Activated CD8-positive, alpha-beta T cell treated with anti-CD3 and anti-CD28 coated beads for 36 hours (primary cell): ENCODE measurements at regions of chr14 and their contacts with region 1.

Region 1: GRCh38 chr14:35814371-35815005 is 5.4 kb upstream of the RALGAPA1 start:
- DNase-seq: peak; percentile 88
- ATAC-seq: peak; percentile 93
- H3K4me3 Mint-ChIP-seq: no peak overlapping the region
- H3K27ac Mint-ChIP-seq: no peak overlapping the region
- H3K4me1 Mint-ChIP-seq: no peaks in the 10 kb centered on the region
- H3K27me3 Mint-ChIP-seq: no peaks in the 10 kb centered on the region
- CTCF ChIP-seq: peak; percentile 78

Region 2: GRCh38 chr14:35438910-35439713 is 375.4 kb before region 1 on chr14:
- CTCF ChIA-PET with region 1: interaction called, 16 read pairs
- POLR2A ChIA-PET with region 1: no interaction called
- intact Hi-C with region 1: loop called (anchors 10 kb)
- DNase-seq: no peak
- ATAC-seq: peak; percentile 45
- H3K4me3 Mint-ChIP-seq: no peak overlapping the region
- H3K27ac Mint-ChIP-seq: no peak overlapping the region
- H3K4me1 Mint-ChIP-seq: peaks cover 6% of the 10 kb centered on the region
- H3K27me3 Mint-ChIP-seq: no peaks in the 10 kb centered on the region
- CTCF ChIP-seq: peak; percentile 77

Region 3: GRCh38 chr14:35687335-35687939 is 127.1 kb before region 1 on chr14:
- CTCF ChIA-PET with region 1: interaction called, 36 read pairs
- POLR2A ChIA-PET with region 1: no interaction called
- intact Hi-C with region 1: no loop called
- DNase-seq: peak; percentile 59
- ATAC-seq: peak; percentile 79
- H3K4me3 Mint-ChIP-seq: no peak overlapping the region
- H3K27ac Mint-ChIP-seq: no peak overlapping the region
- H3K4me1 Mint-ChIP-seq: peaks cover 9% of the 10 kb centered on the region
- H3K27me3 Mint-ChIP-seq: no peaks in the 10 kb centered on the region
- CTCF ChIP-seq: peak; percentile 85

Region 4: GRCh38 chr14:35712466-35712865 is 102.0 kb before region 1 on chr14:
- CTCF ChIA-PET with region 1: interaction called, 10 read pairs
- POLR2A ChIA-PET with region 1: no interaction called
- intact Hi-C with region 1: no loop called
- DNase-seq: no peak
- ATAC-seq: no peak
- H3K4me3 Mint-ChIP-seq: no peak overlapping the region
- H3K27ac Mint-ChIP-seq: no peak overlapping the region
- H3K4me1 Mint-ChIP-seq: no peaks in the 10 kb centered on the region
- H3K27me3 Mint-ChIP-seq: no peaks in the 10 kb centered on the region
- CTCF ChIP-seq: no peak

Region 5: DNA sequence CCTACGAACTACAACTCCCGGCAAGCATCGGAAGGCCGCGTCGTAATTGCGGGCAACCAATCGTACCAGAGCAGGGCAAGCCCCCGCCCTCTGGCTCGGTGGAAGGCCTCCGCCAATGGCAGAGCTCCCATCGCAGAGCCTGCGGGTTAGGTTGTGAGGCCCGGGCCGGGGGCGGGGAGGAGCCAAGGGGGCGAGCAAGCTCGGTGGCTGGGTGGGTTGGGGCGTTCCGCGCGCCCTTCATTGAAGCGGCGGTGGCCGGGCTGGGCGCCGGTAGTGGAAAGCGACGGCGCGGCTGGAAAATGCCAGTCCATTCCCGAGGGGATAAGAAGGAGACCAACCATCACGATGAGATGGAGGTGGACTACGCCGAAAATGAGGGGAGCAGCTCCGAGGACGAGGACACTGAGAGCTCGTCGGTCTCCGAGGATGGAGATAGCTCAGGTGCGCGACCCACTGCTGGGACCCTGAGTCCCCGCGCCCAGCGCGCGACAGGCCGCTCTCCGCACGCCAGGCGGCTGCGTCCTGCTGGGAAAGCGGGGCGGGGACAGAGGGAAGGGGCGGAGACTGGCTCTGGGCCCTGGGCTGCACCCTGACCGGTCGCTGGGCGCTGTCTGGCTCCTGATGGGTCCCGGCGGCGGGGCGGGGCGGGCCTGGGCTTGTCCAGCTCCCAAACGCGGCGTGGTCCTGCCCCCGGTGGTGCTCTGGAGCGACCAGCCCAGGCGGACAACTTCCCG is 11.9 kb after region 1 on chr14 and contains the start of gene BRMS1L:
- CTCF ChIA-PET with region 1: interaction called, 12 read pairs
- POLR2A ChIA-PET with region 1: no interaction called
- intact Hi-C with region 1: no loop called
- DNase-seq: peak; percentile 99
- ATAC-seq: peak; percentile 98
- H3K4me3 Mint-ChIP-seq: peak within 1 kb of the TSS; percentile 80
- H3K27ac Mint-ChIP-seq: peak within 1 kb of the TSS; percentile 76
- H3K4me1 Mint-ChIP-seq: peaks cover 21% of the 10 kb centered on the region
- H3K27me3 Mint-ChIP-seq: no peaks in the 10 kb centered on the region
- CTCF ChIP-seq: no peak
- total RNA-seq, gene BRMS1L: 4.3 to 5.5 TPM